GM12878 (cell line): ENCODE measurements at regions of chr21 and their contacts with region 1.

Region 1: DNA sequence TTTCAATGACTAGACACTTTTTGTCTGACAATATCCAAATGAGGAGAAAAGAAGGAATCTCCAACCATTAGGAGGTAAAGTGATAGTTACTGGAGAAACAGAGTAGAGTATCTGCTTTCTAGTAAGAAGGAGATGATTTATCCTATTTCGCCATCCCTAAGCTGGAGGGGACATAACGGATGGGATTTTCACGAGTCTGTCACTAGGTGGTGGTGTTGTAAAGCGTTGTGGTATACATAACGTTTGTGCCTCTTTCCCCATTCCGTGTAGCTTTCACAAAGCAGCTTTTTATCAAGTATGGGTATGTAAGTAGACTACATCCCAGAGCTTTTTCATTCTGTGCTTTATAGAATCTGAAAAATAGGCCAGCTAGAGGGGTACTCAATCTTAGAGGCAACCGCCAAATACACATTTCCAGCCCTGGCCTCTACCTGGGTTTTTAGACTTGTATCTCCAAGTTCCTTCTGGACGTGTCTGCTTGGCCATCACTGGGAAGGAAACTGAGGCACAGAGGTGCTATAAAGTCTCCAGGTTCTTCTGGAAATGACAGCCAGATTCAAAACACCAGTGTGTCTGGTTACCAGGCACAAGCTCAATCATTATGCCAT is 33.3 kb upstream of the FAM3B start:
- DNase-seq: peak; percentile 61
- ATAC-seq: peak; percentile 99
- H3K4me3 ChIP-seq: no peak overlapping the region
- H3K27ac ChIP-seq: no peak overlapping the region
- H3K4me1 ChIP-seq: no peaks in the 10 kb centered on the region
- H3K27me3 ChIP-seq: peaks cover 2 to 6% of the 10 kb centered on the region in 2 experiments
- CTCF ChIP-seq: peak; percentile 72 to 94 (median 84); a peak in 5 of 6 replicates
- EP300 ChIP-seq: no peak
- POLR2A ChIP-seq: no peak
- RAD21 ChIP-seq: peak; percentile 93

Region 2: DNA sequence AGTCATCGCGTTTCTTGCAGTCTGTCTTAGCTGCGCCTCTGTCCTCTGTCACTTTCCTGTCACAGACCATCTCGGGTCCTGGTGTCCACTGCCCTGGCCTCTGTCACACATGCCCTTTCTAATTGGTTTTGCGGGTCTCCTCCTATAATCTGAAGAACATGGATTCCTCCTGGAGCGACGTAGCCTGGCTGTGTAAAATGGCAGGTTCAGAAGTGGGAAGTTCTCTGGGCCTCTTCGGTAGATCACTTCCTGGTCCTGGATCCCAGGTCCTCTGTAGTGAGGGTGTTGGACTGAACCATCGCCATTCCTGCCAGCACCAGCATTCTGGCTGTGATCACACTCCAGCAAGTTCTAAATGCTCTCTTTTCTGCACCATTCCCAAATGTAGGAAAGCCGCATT is 34.1 kb after region 1 on chr21:
- CTCF ChIA-PET with region 1: interaction called, 15 read pairs
- POLR2A ChIA-PET with region 1: no interaction called
- RAD21 ChIA-PET with region 1: interaction called, 13 read pairs
- SMC1A ChIA-PET with region 1: interaction called, 4 read pairs
- in situ Hi-C with region 1: no loop called
- intact Hi-C with region 1: no loop called
- DNase-seq: no peak
- ATAC-seq: no peak
- H3K4me3 ChIP-seq: no peak overlapping the region
- H3K27ac ChIP-seq: no peak overlapping the region
- H3K4me1 ChIP-seq: no peaks in the 10 kb centered on the region
- H3K27me3 ChIP-seq: peaks cover 0 to 2% of the 10 kb centered on the region in 2 experiments; a peak in 2 of 4 replicates
- CTCF ChIP-seq: no peak
- EP300 ChIP-seq: no peak
- POLR2A ChIP-seq: no peak
- RAD21 ChIP-seq: no peak

Region 3: DNA sequence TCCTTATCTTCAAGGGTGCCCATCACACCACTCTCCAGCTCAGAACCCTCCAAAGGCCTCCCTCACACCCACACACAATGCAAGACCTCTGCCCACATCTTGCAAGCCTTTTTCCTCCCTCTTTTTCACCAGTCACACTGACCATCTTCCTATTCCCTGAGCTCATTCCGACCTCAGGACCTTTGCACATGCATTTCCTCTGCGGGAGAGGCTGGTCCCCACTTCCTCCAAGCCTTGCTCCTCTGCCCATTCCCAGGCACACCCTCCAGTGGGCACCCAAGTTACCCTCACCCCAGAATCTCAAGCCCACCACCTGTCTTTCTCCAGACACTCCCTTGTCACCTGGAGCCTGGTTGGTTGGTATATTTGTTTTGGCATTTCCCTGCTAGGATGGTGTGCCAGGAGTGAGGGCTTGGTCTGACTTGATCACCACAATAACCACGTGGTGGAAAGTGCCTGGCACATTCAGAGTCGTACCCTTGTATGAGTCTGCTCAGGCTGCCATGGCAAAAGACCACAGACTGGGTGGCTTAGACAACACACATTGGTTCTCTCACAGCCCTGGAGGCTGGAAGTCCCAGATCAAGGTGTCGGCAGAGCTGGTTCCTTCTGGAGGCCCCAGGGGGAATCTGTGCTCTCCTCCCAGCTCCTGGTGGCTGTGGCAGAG is 91.7 kb after region 1 on chr21:
- CTCF ChIA-PET with region 1: interaction called, 99 read pairs
- POLR2A ChIA-PET with region 1: interaction called, 4 read pairs
- RAD21 ChIA-PET with region 1: interaction called, 97 read pairs
- SMC1A ChIA-PET with region 1: interaction called, 67 read pairs
- in situ Hi-C with region 1: no loop called
- intact Hi-C with region 1: no loop called
- DNase-seq: no peak
- ATAC-seq: peak; percentile 52
- H3K4me3 ChIP-seq: no peak overlapping the region
- H3K27ac ChIP-seq: no peak overlapping the region
- H3K4me1 ChIP-seq: peaks cover 6% of the 10 kb centered on the region; the same call in 1 of the 2 replicates
- H3K27me3 ChIP-seq: no peaks in the 10 kb centered on the region
- CTCF ChIP-seq: no peak
- EP300 ChIP-seq: no peak
- POLR2A ChIP-seq: no peak
- RAD21 ChIP-seq: no peak

Region 4: GRCh38 chr21:41425954-41426675 is 142.8 kb after region 1 on chr21 and contains the start of gene MX1:
- CTCF ChIA-PET with region 1: interaction called, 16 read pairs
- POLR2A ChIA-PET with region 1: interaction called, 3 read pairs
- RAD21 ChIA-PET with region 1: interaction called, 11 read pairs
- SMC1A ChIA-PET with region 1: interaction called, 19 read pairs
- in situ Hi-C with region 1: no loop called
- intact Hi-C with region 1: no loop called
- DNase-seq: peak; percentile 61
- ATAC-seq: peak; percentile 87
- H3K4me3 ChIP-seq: peak within 1 kb of the TSS; percentile 93
- H3K27ac ChIP-seq: peak within 1 kb of the TSS; percentile 100
- H3K4me1 ChIP-seq: peaks cover 44% of the 10 kb centered on the region
- H3K27me3 ChIP-seq: no peaks in the 10 kb centered on the region
- CTCF ChIP-seq: no peak
- EP300 ChIP-seq: no peak
- POLR2A ChIP-seq: peak; percentile 93
- RAD21 ChIP-seq: no peak
- polyA plus RNA-seq, gene MX1: 75.9 to 90.9 TPM

Region 5: GRCh38 chr21:41460578-41461527 is 177.5 kb after region 1 on chr21:
- CTCF ChIA-PET with region 1: interaction called, 47 read pairs
- POLR2A ChIA-PET with region 1: no interaction called
- RAD21 ChIA-PET with region 1: interaction called, 26 read pairs
- SMC1A ChIA-PET with region 1: interaction called, 21 read pairs
- in situ Hi-C with region 1: loop called (anchors 5 kb)
- intact Hi-C with region 1: loop called (anchors 1 kb)
- DNase-seq: no peak
- ATAC-seq: peak; percentile 89
- H3K4me3 ChIP-seq: no peak overlapping the region
- H3K27ac ChIP-seq: no peak overlapping the region
- H3K4me1 ChIP-seq: no peaks in the 10 kb centered on the region
- H3K27me3 ChIP-seq: no peaks in the 10 kb centered on the region
- CTCF ChIP-seq: peak; percentile 77 to 82 (median 81)
- EP300 ChIP-seq: no peak
- POLR2A ChIP-seq: peak; percentile 62; the same call in 1 of the 2 replicates
- RAD21 ChIP-seq: peak; percentile 60

Region 6: DNA sequence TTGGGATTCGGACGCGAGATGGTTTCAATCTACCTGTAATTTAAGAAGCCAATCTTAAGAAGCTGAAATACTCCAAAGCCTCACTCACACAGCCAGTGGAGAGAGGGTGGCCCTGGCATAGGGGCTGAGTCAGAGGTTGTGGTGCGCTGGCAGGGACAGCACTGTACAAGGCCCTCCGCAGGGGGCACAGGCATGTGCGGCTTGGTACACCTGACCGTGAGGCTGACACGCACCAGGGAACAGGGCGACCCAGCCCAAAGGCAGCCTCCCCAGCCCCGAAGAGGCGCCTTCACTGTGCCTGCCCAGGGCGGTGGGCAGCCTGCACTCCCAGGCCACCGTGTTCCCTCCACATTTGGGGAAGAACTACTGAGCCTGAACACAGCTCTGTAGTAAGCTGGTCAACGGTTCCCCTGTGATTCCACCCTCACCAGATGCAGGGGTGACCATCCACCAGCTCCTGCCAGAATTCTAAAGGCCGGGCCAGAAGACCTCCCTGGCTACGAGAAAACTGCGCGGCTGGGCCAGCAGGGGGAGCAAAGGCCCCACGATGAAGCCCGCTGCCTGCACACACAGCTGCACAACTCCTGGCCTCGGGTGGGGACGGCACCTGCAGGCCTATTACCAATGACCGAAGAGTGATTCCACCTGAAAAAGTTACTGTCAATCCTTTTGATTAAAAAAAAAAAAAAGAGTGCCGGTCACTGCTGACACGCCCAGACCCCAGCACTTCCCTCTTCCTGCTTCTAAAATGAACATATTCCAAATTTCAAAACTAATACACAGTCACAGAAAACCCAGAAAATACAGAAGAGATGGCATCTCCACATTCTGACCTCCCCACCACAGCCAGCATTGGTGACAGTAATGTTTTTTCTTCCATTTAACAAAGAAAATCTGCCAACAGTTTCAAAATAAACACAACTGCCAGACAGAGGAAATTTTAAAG is 533.2 kb after region 1 on chr21:
- CTCF ChIA-PET with region 1: interaction called, 21 read pairs
- POLR2A ChIA-PET with region 1: no interaction called
- RAD21 ChIA-PET with region 1: interaction called, 20 read pairs
- SMC1A ChIA-PET with region 1: interaction called, 9 read pairs
- in situ Hi-C with region 1: no loop called
- intact Hi-C with region 1: no loop called
- DNase-seq: no peak
- ATAC-seq: peak; percentile 99
- H3K4me3 ChIP-seq: no peak overlapping the region
- H3K27ac ChIP-seq: no peak overlapping the region
- H3K4me1 ChIP-seq: peaks cover 5% of the 10 kb centered on the region; the same call in 1 of the 2 replicates
- H3K27me3 ChIP-seq: no peaks in the 10 kb centered on the region
- CTCF ChIP-seq: peak; percentile 84 to 93 (median 87)
- EP300 ChIP-seq: no peak
- POLR2A ChIP-seq: no peak
- RAD21 ChIP-seq: peak; percentile 88